ENCODE measurements at regions of chr13 and their contacts with region 1.

Region 1: GRCh38 chr13:42991892-42992763 is at the start of gene EPSTI1:
- DNase-seq: peak; percentile 87
- ATAC-seq: peak; percentile 82
- H3K4me3 ChIP-seq: peak within 1 kb of the TSS; percentile 70 to 91 (median 80)
- H3K4me3 Mint-ChIP-seq: peak within 1 kb of the TSS; percentile 96
- H3K27ac ChIP-seq: peak within 1 kb of the TSS; percentile 93 to 95
- H3K27ac Mint-ChIP-seq: peak within 1 kb of the TSS; percentile 99
- H3K4me1 ChIP-seq: peaks cover 30 to 45% of the 10 kb centered on the region in 2 donors
- H3K4me1 Mint-ChIP-seq: peaks cover 46% of the 10 kb centered on the region
- H3K27me3 ChIP-seq: no peaks in the 10 kb centered on the region
- H3K27me3 Mint-ChIP-seq: no peaks in the 10 kb centered on the region
- CTCF ChIP-seq: no peak
- total RNA-seq, gene EPSTI1: 41.8 and 45.4 TPM in 2 replicates

Region 2: GRCh38 chr13:42078128-42078808 is 913.9 kb before region 1 on chr13:
- CTCF ChIA-PET with region 1: no interaction called
- POLR2A ChIA-PET with region 1: no interaction called
- intact Hi-C with region 1: no loop called
- DNase-seq: no peak
- ATAC-seq: no peak
- H3K4me3 ChIP-seq: no peak overlapping the region
- H3K4me3 Mint-ChIP-seq: no peak overlapping the region
- H3K27ac ChIP-seq: no peak overlapping the region
- H3K27ac Mint-ChIP-seq: no peak overlapping the region
- H3K4me1 ChIP-seq: no peaks in the 10 kb centered on the region
- H3K4me1 Mint-ChIP-seq: no peaks in the 10 kb centered on the region
- H3K27me3 ChIP-seq: no peaks in the 10 kb centered on the region
- H3K27me3 Mint-ChIP-seq: no peaks in the 10 kb centered on the region
- CTCF ChIP-seq: no peak

Region 3: GRCh38 chr13:42969558-42970172 is 22.5 kb before region 1 on chr13:
- CTCF ChIA-PET with region 1: interaction called, 53 read pairs
- POLR2A ChIA-PET with region 1: interaction called, 11 read pairs
- intact Hi-C with region 1: no loop called
- DNase-seq: peak; percentile 80
- ATAC-seq: peak; percentile 80
- H3K4me3 ChIP-seq: no peak overlapping the region
- H3K4me3 Mint-ChIP-seq: no peak overlapping the region
- H3K27ac ChIP-seq: no peak overlapping the region
- H3K27ac Mint-ChIP-seq: peak overlapping the region; percentile 12
- H3K4me1 ChIP-seq: peaks cover 22 to 29% of the 10 kb centered on the region in 2 donors
- H3K4me1 Mint-ChIP-seq: peaks cover 31% of the 10 kb centered on the region
- H3K27me3 ChIP-seq: no peaks in the 10 kb centered on the region
- H3K27me3 Mint-ChIP-seq: no peaks in the 10 kb centered on the region
- CTCF ChIP-seq: peak; percentile 88

Region 4: DNA sequence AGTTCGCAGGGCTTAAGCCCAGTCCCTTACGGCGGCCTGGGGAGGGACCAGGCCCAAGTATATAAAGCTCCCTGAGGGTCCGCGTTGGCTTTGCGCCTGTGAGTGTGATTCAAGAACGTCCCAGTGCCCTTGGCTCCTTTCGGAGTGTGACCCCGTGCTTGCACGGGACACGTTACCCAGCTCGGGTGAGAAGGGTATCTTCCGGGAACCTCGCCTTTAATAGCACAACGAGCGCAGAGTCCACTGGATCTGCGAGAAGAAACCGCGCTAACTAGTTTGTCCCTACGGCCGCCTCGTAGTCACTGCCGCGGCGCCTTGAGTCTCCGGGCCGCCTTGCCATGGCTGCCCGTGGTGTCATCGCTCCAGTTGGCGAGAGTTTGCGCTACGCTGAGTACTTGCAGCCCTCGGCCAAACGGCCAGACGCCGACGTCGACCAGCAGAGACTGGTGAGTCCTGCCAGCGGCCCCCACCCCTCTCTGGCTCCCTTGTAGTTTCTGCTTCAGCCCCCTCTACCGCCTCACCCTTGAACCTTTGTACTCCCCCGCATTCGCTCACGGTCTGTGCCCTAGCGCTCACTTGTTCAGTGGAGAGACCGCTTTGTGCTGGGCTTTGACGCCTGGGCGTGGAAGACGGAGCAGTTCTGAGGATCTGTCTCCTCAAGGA is 31.3 kb after region 1 on chr13 and contains the start of gene DNAJC15:
- CTCF ChIA-PET with region 1: interaction called, 19 read pairs
- POLR2A ChIA-PET with region 1: interaction called, 19 read pairs
- intact Hi-C with region 1: loop called (anchors 1 kb)
- DNase-seq: peak; percentile 92
- ATAC-seq: peak; percentile 90
- H3K4me3 ChIP-seq: peak within 1 kb of the TSS; percentile 67 to 89 (median 70)
- H3K4me3 Mint-ChIP-seq: peak within 1 kb of the TSS; percentile 96
- H3K27ac ChIP-seq: peak within 1 kb of the TSS; percentile 81 to 87
- H3K27ac Mint-ChIP-seq: peak within 1 kb of the TSS; percentile 97
- H3K4me1 ChIP-seq: peaks cover 25 to 26% of the 10 kb centered on the region in 2 donors
- H3K4me1 Mint-ChIP-seq: peaks cover 41% of the 10 kb centered on the region
- H3K27me3 ChIP-seq: no peaks in the 10 kb centered on the region
- H3K27me3 Mint-ChIP-seq: no peaks in the 10 kb centered on the region
- CTCF ChIP-seq: peak; percentile 25
- total RNA-seq, gene DNAJC15: 13.5 and 15.2 TPM in 2 replicates

Region 5: DNA sequence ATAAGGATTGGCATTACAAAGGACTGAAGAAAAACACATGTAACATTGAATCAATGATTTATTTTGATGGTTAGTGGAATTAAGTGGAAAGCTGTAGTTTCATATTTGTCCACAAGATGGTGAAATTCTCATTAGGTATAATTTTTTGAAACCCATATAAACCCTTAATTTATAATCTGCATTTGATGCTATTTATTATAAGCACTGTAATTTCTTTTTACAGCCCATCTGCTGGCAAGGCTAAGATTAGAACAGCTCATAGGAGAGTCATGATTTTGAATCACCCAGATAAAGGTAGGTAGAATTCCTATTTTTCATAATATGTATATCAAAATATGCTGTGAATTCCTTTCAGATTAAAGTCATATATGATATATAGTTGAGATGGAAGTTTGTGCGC is 93.4 kb after region 1 on chr13:
- CTCF ChIA-PET with region 1: interaction called, 11 read pairs
- POLR2A ChIA-PET with region 1: no interaction called
- intact Hi-C with region 1: no loop called
- DNase-seq: peak; percentile 41
- ATAC-seq: no peak
- H3K4me3 ChIP-seq: no peak overlapping the region
- H3K4me3 Mint-ChIP-seq: no peak overlapping the region
- H3K27ac ChIP-seq: no peak overlapping the region
- H3K27ac Mint-ChIP-seq: no peak overlapping the region
- H3K4me1 ChIP-seq: peaks cover 0 to 6% of the 10 kb centered on the region in 2 donors
- H3K4me1 Mint-ChIP-seq: peaks cover 18% of the 10 kb centered on the region
- H3K27me3 ChIP-seq: no peaks in the 10 kb centered on the region
- H3K27me3 Mint-ChIP-seq: no peaks in the 10 kb centered on the region
- CTCF ChIP-seq: peak; percentile 78

Region 6: DNA sequence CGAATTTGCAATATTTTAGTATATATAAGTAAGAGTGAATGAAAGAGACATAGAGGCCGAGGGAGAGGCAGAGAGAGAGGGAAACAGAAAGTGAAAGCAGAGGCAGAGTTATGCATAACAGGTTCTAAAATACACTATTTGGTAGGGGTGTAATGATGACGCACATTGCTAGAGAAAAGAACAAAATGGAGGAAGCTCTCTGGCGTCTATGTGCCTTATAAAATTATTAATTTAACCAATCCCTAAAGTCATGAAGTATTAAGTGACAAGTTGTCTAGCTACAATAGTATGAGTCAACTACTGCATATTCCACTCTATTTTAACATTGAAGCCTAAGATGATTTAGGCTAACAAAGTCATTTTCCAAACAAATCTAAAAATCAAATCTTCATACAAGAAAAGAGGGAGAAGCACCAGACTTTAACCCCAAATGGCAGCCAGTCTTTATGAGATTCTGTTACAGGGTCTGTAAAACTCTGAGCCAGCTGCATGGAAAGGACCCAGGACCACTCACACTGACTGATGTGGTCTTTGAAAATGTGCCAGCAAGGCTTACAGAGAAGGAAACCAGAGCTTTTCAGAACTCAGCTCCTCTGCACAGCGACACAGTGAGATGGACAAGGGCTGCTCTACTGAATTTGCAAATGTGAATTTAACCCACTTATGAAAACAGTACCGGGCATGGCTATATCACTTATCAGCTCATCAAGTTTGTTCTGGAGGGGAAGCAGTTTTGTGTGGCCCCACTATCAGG is 1282.5 kb after region 1 on chr13:
- CTCF ChIA-PET with region 1: no interaction called
- POLR2A ChIA-PET with region 1: no interaction called
- intact Hi-C with region 1: loop called (anchors 5 kb)
- DNase-seq: peak; percentile 82
- ATAC-seq: peak; percentile 84
- H3K4me3 ChIP-seq: peak overlapping the region in 3 of 5 experiments; percentile 31 to 38 (median 35)
- H3K4me3 Mint-ChIP-seq: peak overlapping the region; percentile 65
- H3K27ac ChIP-seq: peak overlapping the region; percentile 74 to 83
- H3K27ac Mint-ChIP-seq: peak overlapping the region; percentile 85
- H3K4me1 ChIP-seq: peaks cover 29 to 44% of the 10 kb centered on the region in 2 donors
- H3K4me1 Mint-ChIP-seq: peaks cover 40% of the 10 kb centered on the region
- H3K27me3 ChIP-seq: no peaks in the 10 kb centered on the region
- H3K27me3 Mint-ChIP-seq: no peaks in the 10 kb centered on the region
- CTCF ChIP-seq: no peak